PC-3 (cell line): ENCODE measurements at regions of chr6 and their contacts with region 1.

Region 1: DNA sequence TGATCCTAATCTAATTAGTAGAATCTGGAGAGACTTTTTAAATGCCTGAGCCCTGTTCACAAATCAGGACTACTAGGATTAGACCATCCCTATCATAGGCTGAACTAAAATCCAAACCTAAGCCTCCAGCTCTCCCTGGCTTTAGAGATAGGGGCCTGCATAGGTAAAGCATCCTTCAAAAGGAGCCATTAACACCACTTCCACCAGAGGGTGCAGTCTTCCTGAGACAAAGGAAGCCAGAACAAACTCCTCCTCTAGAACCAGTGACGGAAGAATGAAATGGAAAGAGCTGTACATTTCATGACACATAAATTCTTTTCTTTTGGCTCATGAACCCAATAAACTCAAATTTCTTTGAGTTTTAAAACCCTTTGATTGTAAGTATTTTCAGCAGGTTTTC is 291.2 kb upstream of the ADGRB3 start:
- DNase-seq: peak; percentile 83
- ATAC-seq: peak; percentile 96
- H3K4me3 ChIP-seq: no peak overlapping the region
- H3K27ac ChIP-seq: no peak overlapping the region
- H3K4me1 ChIP-seq: no peaks in the 10 kb centered on the region
- H3K27me3 ChIP-seq: no peaks in the 10 kb centered on the region
- CTCF ChIP-seq: peak; percentile 81

Region 2: DNA sequence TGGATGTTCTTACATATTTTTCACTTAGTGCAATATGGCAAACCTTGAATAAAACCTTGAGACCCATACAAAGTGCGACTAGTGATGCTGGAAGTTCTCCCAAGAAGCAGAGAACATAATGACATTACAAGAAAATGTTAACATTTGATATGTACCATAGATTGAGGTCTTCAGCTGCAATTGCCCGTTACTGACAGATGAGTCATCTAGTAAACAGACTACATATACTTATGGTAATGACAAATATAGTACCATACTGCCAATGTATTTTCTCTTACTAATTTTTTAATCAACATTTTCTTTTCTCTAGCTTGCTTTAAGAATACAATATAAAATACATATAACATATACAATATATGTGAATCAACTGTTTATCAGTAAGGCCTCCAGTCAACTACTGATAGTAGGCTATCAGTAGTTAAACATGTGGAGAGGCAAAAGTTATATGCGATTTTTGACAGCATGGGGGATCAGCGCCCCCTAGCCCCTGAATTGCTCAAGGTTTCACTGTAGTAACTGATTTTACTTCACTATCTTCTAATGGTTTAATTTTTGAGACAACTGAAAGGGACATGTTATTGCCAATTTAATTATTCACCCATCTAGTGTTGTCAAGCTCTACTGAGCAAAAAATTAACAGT is 124.5 kb after region 1 on chr6:
- CTCF ChIA-PET with region 1: interaction called, 12 read pairs
- POLR2A ChIA-PET with region 1: no interaction called
- intact Hi-C with region 1: loop called (anchors 1 kb)
- DNase-seq: peak; percentile 52
- ATAC-seq: peak; percentile 87
- H3K4me3 ChIP-seq: no peak overlapping the region
- H3K27ac ChIP-seq: no peak overlapping the region
- H3K4me1 ChIP-seq: peaks cover 4% of the 10 kb centered on the region; the same call in 1 of the 2 replicates
- H3K27me3 ChIP-seq: no peaks in the 10 kb centered on the region
- CTCF ChIP-seq: peak; percentile 72

Region 3: GRCh38 chr6:68497927-68498326 is 154.0 kb after region 1 on chr6:
- CTCF ChIA-PET with region 1: interaction called, 17 read pairs
- POLR2A ChIA-PET with region 1: no interaction called
- intact Hi-C with region 1: loop called (anchors 1 kb)
- DNase-seq: peak; percentile 71
- ATAC-seq: peak; percentile 72
- H3K4me3 ChIP-seq: no peak overlapping the region
- H3K27ac ChIP-seq: no peak overlapping the region
- H3K4me1 ChIP-seq: peaks cover 5% of the 10 kb centered on the region; the same call in 1 of the 2 replicates
- H3K27me3 ChIP-seq: no peaks in the 10 kb centered on the region
- CTCF ChIP-seq: peak; percentile 37; the same call in 1 of the 2 replicates

Region 4: GRCh38 chr6:68559070-68559469 is 215.2 kb after region 1 on chr6:
- CTCF ChIA-PET with region 1: no interaction called
- POLR2A ChIA-PET with region 1: no interaction called
- intact Hi-C with region 1: loop called (anchors 5 kb)
- DNase-seq: peak; percentile 6
- ATAC-seq: peak; percentile 65
- H3K4me3 ChIP-seq: peak overlapping the region; percentile 31; the same call in 1 of the 2 replicates
- H3K27ac ChIP-seq: peak overlapping the region; percentile 50
- H3K4me1 ChIP-seq: peaks cover 6% of the 10 kb centered on the region
- H3K27me3 ChIP-seq: no peaks in the 10 kb centered on the region
- CTCF ChIP-seq: no peak

Region 5: GRCh38 chr6:68778356-68779020 is 434.6 kb after region 1 on chr6:
- CTCF ChIA-PET with region 1: no interaction called
- POLR2A ChIA-PET with region 1: no interaction called
- intact Hi-C with region 1: loop called (anchors 1 kb)
- DNase-seq: peak; percentile 50
- ATAC-seq: peak; percentile 62
- H3K4me3 ChIP-seq: no peak overlapping the region
- H3K27ac ChIP-seq: no peak overlapping the region
- H3K4me1 ChIP-seq: no peaks in the 10 kb centered on the region
- H3K27me3 ChIP-seq: no peaks in the 10 kb centered on the region
- CTCF ChIP-seq: peak; percentile 68

Region 6: DNA sequence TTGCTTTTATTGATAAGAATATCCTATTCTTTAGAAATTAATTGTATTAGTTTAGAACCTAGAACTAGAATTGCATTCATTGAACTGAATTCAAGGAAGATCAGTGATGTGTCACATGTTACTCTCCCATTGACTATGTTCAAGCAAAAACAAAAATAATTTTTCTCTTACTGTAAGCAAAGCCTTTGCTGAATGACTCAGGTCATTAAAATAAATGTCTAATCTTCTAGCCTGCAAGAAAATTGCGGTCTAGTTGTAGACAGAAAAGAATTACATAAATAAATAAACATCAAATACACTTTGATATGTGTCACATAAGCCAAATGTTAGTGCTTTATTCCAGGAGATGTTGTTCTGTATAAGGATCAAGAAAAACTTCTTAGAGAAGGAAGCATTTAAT is 679.1 kb after region 1 on chr6:
- CTCF ChIA-PET with region 1: no interaction called
- POLR2A ChIA-PET with region 1: no interaction called
- intact Hi-C with region 1: no loop called
- DNase-seq: peak; percentile 43
- ATAC-seq: peak; percentile 42
- H3K4me3 ChIP-seq: no peak overlapping the region
- H3K27ac ChIP-seq: no peak overlapping the region
- H3K4me1 ChIP-seq: no peaks in the 10 kb centered on the region
- H3K27me3 ChIP-seq: no peaks in the 10 kb centered on the region
- CTCF ChIP-seq: no peak